ENCODE measurements at regions of chr1 and their contacts with region 1.

Region 1: DNA sequence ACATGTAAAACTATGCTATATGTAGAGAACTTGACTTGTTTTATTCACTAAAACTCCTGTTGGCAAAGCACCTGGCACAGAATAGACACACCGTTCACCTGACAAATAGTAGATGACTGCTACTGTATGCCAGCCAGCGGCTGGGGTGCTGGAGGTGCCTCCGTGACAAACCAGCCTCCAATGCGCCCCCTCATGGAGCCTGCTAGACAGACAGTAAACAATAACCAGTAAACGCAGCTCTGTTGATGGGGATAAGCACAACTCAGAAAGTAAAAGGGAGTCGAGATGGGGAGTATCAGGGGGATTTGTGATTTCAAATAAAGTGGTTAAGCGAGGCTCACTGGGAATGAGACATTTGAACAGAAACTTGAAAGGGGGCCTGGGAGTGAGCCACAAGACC is 107.2 kb downstream of the PRDM2 start:
- DNase-seq: peak; percentile 27
- H3K4me3 Mint-ChIP-seq: no peak overlapping the region
- H3K27ac Mint-ChIP-seq: no peak overlapping the region
- H3K4me1 Mint-ChIP-seq: peaks cover 22% of the 10 kb centered on the region
- H3K27me3 Mint-ChIP-seq: no peaks in the 10 kb centered on the region
- CTCF ChIP-seq: peak; percentile 9

Region 2: DNA sequence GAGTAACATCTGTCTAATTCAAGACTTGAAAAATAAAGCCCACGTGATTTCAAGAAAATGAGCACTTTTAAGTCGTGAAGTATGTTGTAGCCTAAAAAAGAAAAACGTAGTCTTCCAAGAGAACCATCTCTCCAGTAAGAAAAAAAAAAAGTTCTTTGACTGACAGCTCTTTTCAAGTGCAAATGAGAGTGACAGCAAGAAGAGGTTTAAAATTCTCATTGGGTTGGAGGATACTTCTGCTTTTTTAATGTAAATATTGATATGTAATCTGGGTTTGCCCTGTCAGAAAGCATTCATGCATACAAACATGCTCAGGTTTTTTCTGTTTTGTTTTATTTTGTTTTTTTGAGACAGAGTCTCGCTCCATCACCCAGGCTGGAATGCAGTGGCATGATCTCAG is 139.5 kb before region 1 on chr1:
- CTCF ChIA-PET with region 1: no interaction called
- POLR2A ChIA-PET with region 1: no interaction called
- intact Hi-C with region 1: loop called (anchors 5 kb)
- DNase-seq: no peak
- H3K4me3 Mint-ChIP-seq: no peak overlapping the region
- H3K27ac Mint-ChIP-seq: no peak overlapping the region
- H3K4me1 Mint-ChIP-seq: peaks cover 20% of the 10 kb centered on the region
- H3K27me3 Mint-ChIP-seq: no peaks in the 10 kb centered on the region
- CTCF ChIP-seq: no peak

Measured in MCF 10A (cell line).